Activated CD4-positive, alpha-beta T cell treated with anti-CD3 and anti-CD28 coated beads, Interleukin-2, amount 10 ng/mL, durations not matched to agents 24 days and 14 days (primary cell): ENCODE measurements at regions of chr16 and their contacts with region 1.

Region 1: DNA sequence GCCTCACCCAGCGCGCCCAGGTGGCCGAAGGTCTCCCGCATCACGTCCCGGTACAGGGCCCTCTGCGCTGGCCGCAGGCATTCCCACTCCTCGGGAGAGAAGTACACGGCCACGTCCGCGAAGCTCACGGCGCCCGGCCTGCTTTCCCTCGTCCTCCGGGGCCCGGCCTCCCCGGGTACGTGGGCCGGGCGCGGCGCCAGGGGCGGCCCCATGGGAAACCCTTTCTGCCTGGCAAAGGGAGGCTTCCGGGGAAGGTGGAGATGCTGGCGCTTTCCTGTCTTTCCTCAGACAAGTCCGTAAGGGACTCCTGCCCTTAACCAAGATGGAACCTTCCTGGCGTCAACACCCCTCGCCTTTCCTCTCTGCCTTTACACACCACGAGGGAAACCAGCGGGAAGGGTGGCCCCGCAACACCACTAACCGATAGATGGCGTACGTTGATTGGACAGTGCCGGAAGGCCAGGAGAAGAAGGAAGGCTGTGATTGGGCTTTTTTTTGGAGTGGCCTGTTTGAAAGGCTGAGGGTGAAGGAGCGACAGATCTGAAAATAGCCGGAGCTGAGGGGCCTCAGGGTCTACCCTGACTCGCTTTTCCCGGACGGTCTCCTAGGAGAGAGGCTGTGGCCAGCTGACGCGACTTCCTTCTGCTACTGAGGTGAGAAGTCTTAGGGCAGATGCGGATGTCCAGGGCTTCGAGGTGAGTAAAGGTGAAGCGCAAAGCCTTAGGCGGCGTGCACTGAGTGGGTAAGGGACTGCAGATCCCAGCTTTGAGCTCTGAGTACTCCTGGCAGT is at the start of gene ZNF785:
- DNase-seq: peak; percentile 98
- H3K4me3 Mint-ChIP-seq: peak within 1 kb of the TSS; percentile 90
- H3K27ac Mint-ChIP-seq: peak within 1 kb of the TSS; percentile 91
- H3K4me1 Mint-ChIP-seq: peaks cover 25% of the 10 kb centered on the region
- H3K27me3 Mint-ChIP-seq: no peaks in the 10 kb centered on the region
- total RNA-seq, gene ZNF785: 17.1 and 17.8 TPM in 2 replicates

Region 2: GRCh38 chr16:30526823-30527635 is 58.6 kb before region 1 on chr16:
- intact Hi-C with region 1: loop called (anchors 1 kb)
- DNase-seq: peak; percentile 98
- H3K4me3 Mint-ChIP-seq: peak overlapping the region; percentile 81
- H3K27ac Mint-ChIP-seq: peak overlapping the region; percentile 81
- H3K4me1 Mint-ChIP-seq: peaks cover 26% of the 10 kb centered on the region
- H3K27me3 Mint-ChIP-seq: no peaks in the 10 kb centered on the region

Region 3: GRCh38 chr16:30557957-30558788 is 27.4 kb before region 1 on chr16 and contains the start of gene ZNF764:
- intact Hi-C with region 1: loop called (anchors 1 kb)
- DNase-seq: peak; percentile 99
- H3K4me3 Mint-ChIP-seq: peak within 1 kb of the TSS; percentile 91
- H3K27ac Mint-ChIP-seq: peak within 1 kb of the TSS; percentile 91
- H3K4me1 Mint-ChIP-seq: peaks cover 41% of the 10 kb centered on the region
- H3K27me3 Mint-ChIP-seq: no peaks in the 10 kb centered on the region
- total RNA-seq, gene ZNF764: 13.9 and 14.9 TPM in 2 replicates

Region 4: GRCh38 chr16:30571695-30572600 is 13.6 kb before region 1 on chr16 and contains the start of gene ZNF688:
- intact Hi-C with region 1: loop called (anchors 1 kb)
- DNase-seq: peak; percentile 98
- H3K4me3 Mint-ChIP-seq: peak within 1 kb of the TSS; percentile 97
- H3K27ac Mint-ChIP-seq: peak within 1 kb of the TSS; percentile 91
- H3K4me1 Mint-ChIP-seq: peaks cover 49% of the 10 kb centered on the region
- H3K27me3 Mint-ChIP-seq: no peaks in the 10 kb centered on the region
- total RNA-seq, gene ZNF688: 6.6 and 8.0 TPM in 2 replicates

Region 5: DNA sequence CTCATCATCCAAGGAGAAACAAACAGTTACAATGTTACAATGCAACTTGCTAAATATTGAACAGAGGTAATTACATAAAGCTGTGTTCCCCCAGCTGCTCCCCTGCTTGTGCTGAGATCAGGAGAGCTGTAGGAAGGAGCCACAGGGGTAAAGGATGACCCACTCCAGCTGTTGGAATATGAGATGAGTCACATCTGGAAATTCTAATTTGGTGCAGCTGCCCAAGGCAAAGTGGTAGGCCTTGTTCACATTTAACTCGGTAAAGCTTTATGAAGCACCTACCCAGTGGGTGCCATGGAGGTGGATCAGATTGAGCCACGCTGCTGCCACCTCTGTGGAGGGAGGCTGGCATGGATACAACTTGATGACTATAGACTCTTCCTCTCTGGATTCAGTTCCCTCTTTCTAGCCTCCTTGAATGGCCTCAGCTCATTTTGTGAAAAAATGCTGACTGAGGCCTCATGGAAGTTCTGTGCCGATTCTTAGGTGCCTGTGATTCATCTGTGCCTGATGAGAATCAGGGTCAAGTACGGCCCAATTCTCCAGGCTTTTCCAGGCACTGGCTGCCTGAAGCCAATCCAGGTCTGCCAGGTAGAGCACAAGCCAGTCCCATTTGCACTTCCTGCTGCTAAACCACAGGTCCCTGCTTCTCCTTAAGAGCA is 17.2 kb after region 1 on chr16:
- intact Hi-C with region 1: no loop called
- DNase-seq: no peak
- H3K4me3 Mint-ChIP-seq: no peak overlapping the region
- H3K27ac Mint-ChIP-seq: no peak overlapping the region
- H3K4me1 Mint-ChIP-seq: peaks cover 8% of the 10 kb centered on the region
- H3K27me3 Mint-ChIP-seq: no peaks in the 10 kb centered on the region